PC-9 (cell line): ENCODE measurements at regions of chr15 and their contacts with region 1.

Region 1: GRCh38 chr15:64566629-64567427 is 106.5 kb downstream of the ZNF609 start:
- DNase-seq: no peak
- H3K4me3 ChIP-seq: no peak overlapping the region
- H3K27ac ChIP-seq: 0 out of 2 replicates have a peak overlapping the region, but pooled peaks have one; percentile 12
- H3K4me1 ChIP-seq: peaks cover 26% of the 10 kb centered on the region
- H3K27me3 ChIP-seq: no peaks in the 10 kb centered on the region
- CTCF ChIP-seq: no peak

Region 2: GRCh38 chr15:64443747-64444621 is 122.8 kb before region 1 on chr15:
- CTCF ChIA-PET with region 1: no interaction called
- POLR2A ChIA-PET with region 1: interaction called, 10 read pairs
- intact Hi-C with region 1: no loop called
- DNase-seq: peak; percentile 26 to 80
- H3K4me3 ChIP-seq: peak overlapping the region; percentile 35; the same call in 1 of the 2 replicates
- H3K27ac ChIP-seq: peak overlapping the region; percentile 82
- H3K4me1 ChIP-seq: peaks cover 25% of the 10 kb centered on the region
- H3K27me3 ChIP-seq: no peaks in the 10 kb centered on the region
- CTCF ChIP-seq: no peak

Region 3: GRCh38 chr15:64775551-64776401 is 208.9 kb after region 1 on chr15 and contains the start of gene RBPMS2:
- CTCF ChIA-PET with region 1: no interaction called
- POLR2A ChIA-PET with region 1: no interaction called
- intact Hi-C with region 1: no loop called
- DNase-seq: peak in 1 of 2 experiments; percentile 26
- H3K4me3 ChIP-seq: peak within 1 kb of the TSS; percentile 55; the same call in 1 of the 2 replicates
- H3K27ac ChIP-seq: no peak within 1 kb of the TSS
- H3K4me1 ChIP-seq: no peaks in the 10 kb centered on the region
- H3K27me3 ChIP-seq: peaks cover 5% of the 10 kb centered on the region; the same call in 1 of the 2 replicates
- CTCF ChIP-seq: no peak
- total RNA-seq, gene RBPMS2: 4.1 and 5.3 TPM in 2 replicates